PC-3 (cell line): ENCODE measurements at regions of chr11 and their contacts with region 1.

Region 1: GRCh38 chr11:99325807-99326206 is 305.1 kb downstream of the CNTN5 start:
- DNase-seq: peak; percentile 93
- ATAC-seq: peak; percentile 97
- H3K4me3 ChIP-seq: peak overlapping the region; percentile 26; the same call in 1 of the 2 replicates
- H3K27ac ChIP-seq: peak overlapping the region; percentile 42
- H3K4me1 ChIP-seq: peaks cover 15% of the 10 kb centered on the region
- H3K27me3 ChIP-seq: no peaks in the 10 kb centered on the region
- CTCF ChIP-seq: no peak

Region 2: GRCh38 chr11:99208813-99209212 is 117.0 kb before region 1 on chr11:
- CTCF ChIA-PET with region 1: no interaction called
- POLR2A ChIA-PET with region 1: no interaction called
- intact Hi-C with region 1: loop called (anchors 5 kb)
- DNase-seq: no peak
- ATAC-seq: no peak
- H3K4me3 ChIP-seq: no peak overlapping the region
- H3K27ac ChIP-seq: no peak overlapping the region
- H3K4me1 ChIP-seq: peaks cover 13% of the 10 kb centered on the region
- H3K27me3 ChIP-seq: no peaks in the 10 kb centered on the region
- CTCF ChIP-seq: no peak

Region 3: DNA sequence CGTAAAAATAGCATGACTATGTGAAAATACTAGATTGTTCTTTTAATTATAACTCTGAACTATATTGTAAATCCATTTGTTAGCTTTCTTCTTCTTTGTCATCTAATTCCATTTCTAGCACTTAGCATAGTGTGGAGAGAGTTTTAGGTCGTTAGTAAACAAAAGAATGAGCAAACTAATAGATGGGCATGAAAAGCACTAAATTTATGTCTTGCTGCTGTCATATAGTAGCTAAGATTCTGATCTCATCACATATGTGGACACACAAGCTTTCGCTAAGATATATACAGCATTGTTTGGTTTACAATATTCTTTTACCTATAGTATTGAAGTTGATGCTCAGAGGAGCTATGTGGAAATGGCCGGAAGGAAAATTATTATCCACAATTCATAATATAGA is 65.4 kb after region 1 on chr11:
- CTCF ChIA-PET with region 1: no interaction called
- POLR2A ChIA-PET with region 1: no interaction called
- intact Hi-C with region 1: loop called (anchors 2 kb)
- DNase-seq: no peak
- ATAC-seq: no peak
- H3K4me3 ChIP-seq: no peak overlapping the region
- H3K27ac ChIP-seq: no peak overlapping the region
- H3K4me1 ChIP-seq: no peaks in the 10 kb centered on the region
- H3K27me3 ChIP-seq: no peaks in the 10 kb centered on the region
- CTCF ChIP-seq: no peak